ENCODE measurements at regions of chr13 and their contacts with region 1.

Region 1: DNA sequence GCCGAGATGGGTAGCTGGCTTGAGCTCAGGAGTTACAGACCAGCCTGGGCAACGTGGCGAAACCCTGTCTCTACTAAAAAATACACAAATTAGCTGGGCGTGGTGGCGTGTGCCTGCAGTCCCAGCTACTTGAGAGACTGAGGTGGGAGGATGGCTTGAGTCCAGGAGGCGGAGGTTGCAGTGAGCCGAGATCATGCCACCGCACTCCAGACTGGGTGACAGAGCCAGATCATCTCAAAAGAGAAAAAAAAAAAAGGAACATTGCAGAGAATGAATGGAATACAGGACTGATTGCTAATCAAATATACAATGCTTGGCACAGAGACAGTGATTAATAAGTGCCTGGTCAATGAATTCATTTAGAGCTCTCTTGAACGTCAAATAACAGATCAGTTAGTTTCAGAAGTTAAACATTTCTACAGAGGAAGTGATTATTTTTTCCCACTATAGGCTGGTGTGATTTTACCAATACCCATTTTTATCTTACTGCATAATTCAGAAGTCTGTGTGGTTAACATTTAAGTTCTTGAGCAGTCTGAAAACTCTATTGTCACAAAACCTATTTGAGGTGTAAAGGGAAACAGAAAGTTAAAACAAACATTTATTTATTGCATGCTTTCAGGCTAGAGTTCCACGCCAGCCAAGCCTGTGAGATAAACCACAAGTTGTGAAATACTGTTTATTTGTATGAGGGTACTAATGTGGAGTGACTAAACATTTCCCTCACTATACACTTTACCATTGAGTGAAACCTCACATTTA is 7.7 kb upstream of the TBC1D4 start:
- DNase-seq: no peak
- H3K4me3 Mint-ChIP-seq: no peak overlapping the region
- H3K27ac Mint-ChIP-seq: peak overlapping the region; percentile 20
- H3K4me1 Mint-ChIP-seq: peaks cover 30% of the 10 kb centered on the region
- H3K27me3 Mint-ChIP-seq: peaks cover 12% of the 10 kb centered on the region

Region 2: GRCh38 chr13:73702419-73703071 is 1787.1 kb before region 1 on chr13:
- intact Hi-C with region 1: loop called (anchors 5 kb)
- DNase-seq: peak; percentile 21
- H3K4me3 Mint-ChIP-seq: peak overlapping the region; percentile 50
- H3K27ac Mint-ChIP-seq: peak overlapping the region; percentile 65
- H3K4me1 Mint-ChIP-seq: peaks cover 27% of the 10 kb centered on the region
- H3K27me3 Mint-ChIP-seq: no peaks in the 10 kb centered on the region

Region 3: GRCh38 chr13:74243637-74244526 is 1245.8 kb before region 1 on chr13:
- intact Hi-C with region 1: loop called (anchors 1 kb)
- DNase-seq: no peak
- H3K4me3 Mint-ChIP-seq: peak overlapping the region; percentile 60
- H3K27ac Mint-ChIP-seq: peak overlapping the region; percentile 82
- H3K4me1 Mint-ChIP-seq: peaks cover 32% of the 10 kb centered on the region
- H3K27me3 Mint-ChIP-seq: peaks cover 2% of the 10 kb centered on the region

Region 4: GRCh38 chr13:75445717-75446499 is 43.8 kb before region 1 on chr13:
- intact Hi-C with region 1: no loop called
- DNase-seq: no peak
- H3K4me3 Mint-ChIP-seq: no peak overlapping the region
- H3K27ac Mint-ChIP-seq: no peak overlapping the region
- H3K4me1 Mint-ChIP-seq: no peaks in the 10 kb centered on the region
- H3K27me3 Mint-ChIP-seq: peaks cover 4% of the 10 kb centered on the region

Region 5: DNA sequence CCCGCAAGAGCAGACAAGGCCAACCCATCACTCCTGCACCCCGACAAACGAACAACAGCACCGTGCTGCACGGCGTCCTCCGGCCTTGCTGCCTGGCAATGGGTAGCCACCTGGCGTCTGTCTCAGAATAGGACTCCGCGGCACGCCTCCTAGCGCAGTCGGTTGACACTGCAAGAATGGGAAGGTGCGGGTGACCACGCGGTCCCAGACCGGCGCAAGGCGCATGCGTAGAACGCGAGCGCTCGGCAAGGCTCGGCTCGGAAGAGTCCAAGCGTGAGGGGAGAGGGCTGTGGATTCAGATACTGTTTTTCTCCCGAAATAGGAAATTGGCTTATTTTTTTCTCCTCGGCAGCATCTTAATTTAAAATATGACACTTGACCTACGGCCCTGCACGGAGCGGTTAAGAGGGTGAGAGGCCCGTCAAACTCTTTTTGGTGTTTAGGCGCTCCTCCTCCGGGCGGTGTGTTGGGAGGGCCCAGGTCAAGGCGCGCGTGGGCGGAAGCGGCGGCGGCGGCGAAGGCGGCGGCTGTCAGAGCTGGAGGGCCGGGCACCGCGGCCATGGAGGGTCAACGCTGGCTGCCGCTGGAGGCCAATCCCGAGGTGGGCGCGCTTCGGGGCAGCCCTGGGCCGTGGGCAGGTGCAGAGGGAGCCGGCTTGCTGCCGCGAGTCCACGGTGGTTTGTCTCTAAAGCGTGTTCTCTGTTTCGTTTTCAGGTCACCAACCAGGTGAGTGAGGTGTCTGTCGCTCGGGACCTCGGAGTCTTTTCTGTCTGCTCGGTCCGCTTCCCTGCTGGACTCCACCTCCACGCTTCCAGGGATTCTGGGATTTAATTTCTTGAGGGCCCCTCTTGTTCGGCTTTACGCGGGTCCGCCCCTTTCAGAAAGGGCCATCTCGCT is 59.8 kb after region 1 on chr13 and contains the start of gene UCHL3:
- intact Hi-C with region 1: no loop called
- DNase-seq: peak; percentile 95
- H3K4me3 Mint-ChIP-seq: peak within 1 kb of the TSS; percentile 99
- H3K27ac Mint-ChIP-seq: peak within 1 kb of the TSS; percentile 98
- H3K4me1 Mint-ChIP-seq: peaks cover 39% of the 10 kb centered on the region
- H3K27me3 Mint-ChIP-seq: no peaks in the 10 kb centered on the region
- total RNA-seq, gene UCHL3: 38.9 and 46.6 TPM in 2 replicates

Measured in activated T-helper 1 cell treated with anti-CD3 and anti-CD28 coated beads, Interleukin-12 subunit alpha, Interleukin-12 subunit beta, Interleukin-2, Interleukin-4 antibody, amounts not matched to agents 30 ng/mL and 10 ng/mL and 1 ng/mL, durations not matched to agents 14 hours and 24 hours and 36 hours (primary cell).